Vagina (tissue), 2 donors: ENCODE measurements at regions of chr5 and their contacts with region 1.

Region 1: GRCh38 chr5:95961617-95962474 is at the start of gene ELL2:
- DNase-seq: peak; percentile 100
- H3K4me3 ChIP-seq: peak within 1 kb of the TSS; percentile 58 to 91
- H3K27ac ChIP-seq: peak within 1 kb of the TSS; percentile 99
- H3K4me1 ChIP-seq: peaks cover 29% of the 10 kb centered on the region
- H3K27me3 ChIP-seq: no peaks in the 10 kb centered on the region
- CTCF ChIP-seq: no peak
- POLR2A ChIP-seq: peak; percentile 54 to 95
- total RNA-seq, gene ELL2: 113 TPM

Region 2: DNA sequence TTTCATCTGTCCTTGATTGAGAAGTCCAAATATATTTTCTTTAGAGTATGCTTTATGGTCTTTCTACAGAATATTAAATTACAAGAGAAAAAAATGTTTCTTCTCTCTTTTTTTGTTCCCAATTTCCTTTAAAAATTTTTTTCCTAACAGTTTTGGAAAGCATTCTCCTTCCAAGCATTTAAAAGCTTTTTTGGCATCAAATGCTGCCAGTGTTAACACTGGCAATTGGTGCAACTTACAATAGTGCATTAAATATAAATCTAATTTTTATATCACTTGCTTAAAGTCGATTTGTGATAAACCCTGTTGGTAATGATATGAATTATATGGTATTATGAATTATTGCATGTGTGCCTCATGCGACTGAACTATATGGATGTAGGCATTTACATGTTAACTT is 165.7 kb after region 1 on chr5:
- intact Hi-C with region 1: loop called (anchors 2 kb)
- DNase-seq: no peak
- H3K4me3 ChIP-seq: no peak overlapping the region
- H3K27ac ChIP-seq: peak overlapping the region; percentile 42
- H3K4me1 ChIP-seq: peaks cover 18% of the 10 kb centered on the region
- H3K27me3 ChIP-seq: no peaks in the 10 kb centered on the region
- CTCF ChIP-seq: no peak
- POLR2A ChIP-seq: no peak

Region 3: GRCh38 chr5:96336351-96336985 is 374.6 kb after region 1 on chr5:
- intact Hi-C with region 1: loop called (anchors 10 kb)
- DNase-seq: no peak
- H3K4me3 ChIP-seq: no peak overlapping the region
- H3K27ac ChIP-seq: peak overlapping the region; percentile 57
- H3K4me1 ChIP-seq: peaks cover 12% of the 10 kb centered on the region
- H3K27me3 ChIP-seq: no peaks in the 10 kb centered on the region
- CTCF ChIP-seq: peak; percentile 73 to 89 (median 79)
- POLR2A ChIP-seq: no peak